ENCODE measurements at regions of chr6 and their contacts with region 1.

Region 1: GRCh38 chr6:44172731-44173500 is 14.3 kb downstream of the CAPN11 start:
- DNase-seq: peak; percentile 63
- ATAC-seq: peak; percentile 75
- H3K4me3 Mint-ChIP-seq: no peak overlapping the region
- H3K27ac Mint-ChIP-seq: no peak overlapping the region
- H3K4me1 Mint-ChIP-seq: peaks cover 14% of the 10 kb centered on the region
- H3K27me3 Mint-ChIP-seq: peaks cover 7% of the 10 kb centered on the region
- CTCF ChIP-seq: no peak

Region 2: GRCh38 chr6:44237813-44238433 is 65.0 kb after region 1 on chr6:
- CTCF ChIA-PET with region 1: interaction called, 30 read pairs
- POLR2A ChIA-PET with region 1: interaction called, 5 read pairs
- intact Hi-C with region 1: loop called (anchors 1 kb)
- DNase-seq: peak; percentile 87
- ATAC-seq: peak; percentile 91
- H3K4me3 Mint-ChIP-seq: peak overlapping the region; percentile 95
- H3K27ac Mint-ChIP-seq: peak overlapping the region; percentile 90
- H3K4me1 Mint-ChIP-seq: peaks cover 17% of the 10 kb centered on the region
- H3K27me3 Mint-ChIP-seq: no peaks in the 10 kb centered on the region
- CTCF ChIP-seq: peak; percentile 84

Region 3: GRCh38 chr6:44304282-44305199 is 131.6 kb after region 1 on chr6:
- CTCF ChIA-PET with region 1: interaction called, 21 read pairs
- POLR2A ChIA-PET with region 1: interaction called, 3 read pairs
- intact Hi-C with region 1: loop called (anchors 1 kb)
- DNase-seq: peak; percentile 47
- ATAC-seq: peak; percentile 93
- H3K4me3 Mint-ChIP-seq: no peak overlapping the region
- H3K27ac Mint-ChIP-seq: no peak overlapping the region
- H3K4me1 Mint-ChIP-seq: no peaks in the 10 kb centered on the region
- H3K27me3 Mint-ChIP-seq: no peaks in the 10 kb centered on the region
- CTCF ChIP-seq: peak; percentile 33

Region 4: GRCh38 chr6:44312901-44313788 is 140.2 kb after region 1 on chr6 and contains the start of gene AARS2:
- CTCF ChIA-PET with region 1: interaction called, 3 read pairs
- POLR2A ChIA-PET with region 1: interaction called, 3 read pairs
- intact Hi-C with region 1: loop called (anchors 1 kb)
- DNase-seq: peak; percentile 94
- ATAC-seq: peak; percentile 96
- H3K4me3 Mint-ChIP-seq: peak within 1 kb of the TSS; percentile 96
- H3K27ac Mint-ChIP-seq: peak within 1 kb of the TSS; percentile 91
- H3K4me1 Mint-ChIP-seq: peaks cover 14% of the 10 kb centered on the region
- H3K27me3 Mint-ChIP-seq: peaks cover 6% of the 10 kb centered on the region
- CTCF ChIP-seq: peak; percentile 85
- total RNA-seq, gene AARS2: 19.1 and 22.4 TPM in 2 replicates

Region 5: DNA sequence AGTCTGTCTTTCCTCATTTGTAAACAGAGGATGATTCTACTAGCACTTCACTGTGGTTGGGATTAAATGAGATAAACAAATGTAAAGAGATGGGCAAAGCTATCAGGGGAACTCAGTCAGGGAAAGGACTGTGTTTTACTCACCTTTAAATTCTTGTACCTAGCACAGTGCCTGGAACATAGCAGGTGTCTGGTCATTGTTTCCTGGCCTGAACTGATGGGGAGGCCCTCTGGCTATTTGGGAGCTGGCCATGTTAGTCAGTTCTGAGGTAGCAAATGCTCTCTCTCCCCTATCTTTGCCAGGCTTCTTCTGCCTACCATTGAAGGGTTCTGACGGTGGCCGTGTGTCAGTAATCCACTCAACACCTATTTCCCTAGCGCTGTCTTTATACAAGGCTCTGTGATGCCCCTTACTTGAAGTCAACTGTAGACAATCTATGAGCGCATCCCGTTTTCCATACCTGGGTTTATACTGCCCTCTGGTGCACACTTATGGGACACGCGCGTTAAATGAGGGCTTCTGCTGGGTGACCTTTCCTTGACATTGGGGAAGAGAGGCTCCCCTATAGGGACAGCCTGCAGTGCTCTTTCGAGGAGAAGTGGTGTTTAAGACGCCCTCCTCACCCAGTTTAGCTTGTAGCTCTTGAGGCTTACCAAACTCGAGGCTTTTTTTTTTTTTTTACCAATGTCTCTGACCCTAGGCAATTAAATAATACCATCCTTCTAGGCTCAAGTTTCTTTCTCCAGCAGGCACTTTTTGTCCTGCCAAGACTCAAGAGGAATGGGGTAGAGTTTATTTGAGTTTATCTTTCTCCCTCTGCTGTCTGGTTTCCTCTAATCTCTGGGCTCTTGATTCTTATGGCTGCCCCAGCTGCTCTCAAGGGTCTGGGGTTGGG is 165.6 kb after region 1 on chr6:
- CTCF ChIA-PET with region 1: interaction called, 39 read pairs
- POLR2A ChIA-PET with region 1: no interaction called
- intact Hi-C with region 1: loop called (anchors 1 kb)
- DNase-seq: peak; percentile 36
- ATAC-seq: peak; percentile 94
- H3K4me3 Mint-ChIP-seq: no peak overlapping the region
- H3K27ac Mint-ChIP-seq: no peak overlapping the region
- H3K4me1 Mint-ChIP-seq: no peaks in the 10 kb centered on the region
- H3K27me3 Mint-ChIP-seq: peaks cover 22% of the 10 kb centered on the region
- CTCF ChIP-seq: peak; percentile 58

Region 6: DNA sequence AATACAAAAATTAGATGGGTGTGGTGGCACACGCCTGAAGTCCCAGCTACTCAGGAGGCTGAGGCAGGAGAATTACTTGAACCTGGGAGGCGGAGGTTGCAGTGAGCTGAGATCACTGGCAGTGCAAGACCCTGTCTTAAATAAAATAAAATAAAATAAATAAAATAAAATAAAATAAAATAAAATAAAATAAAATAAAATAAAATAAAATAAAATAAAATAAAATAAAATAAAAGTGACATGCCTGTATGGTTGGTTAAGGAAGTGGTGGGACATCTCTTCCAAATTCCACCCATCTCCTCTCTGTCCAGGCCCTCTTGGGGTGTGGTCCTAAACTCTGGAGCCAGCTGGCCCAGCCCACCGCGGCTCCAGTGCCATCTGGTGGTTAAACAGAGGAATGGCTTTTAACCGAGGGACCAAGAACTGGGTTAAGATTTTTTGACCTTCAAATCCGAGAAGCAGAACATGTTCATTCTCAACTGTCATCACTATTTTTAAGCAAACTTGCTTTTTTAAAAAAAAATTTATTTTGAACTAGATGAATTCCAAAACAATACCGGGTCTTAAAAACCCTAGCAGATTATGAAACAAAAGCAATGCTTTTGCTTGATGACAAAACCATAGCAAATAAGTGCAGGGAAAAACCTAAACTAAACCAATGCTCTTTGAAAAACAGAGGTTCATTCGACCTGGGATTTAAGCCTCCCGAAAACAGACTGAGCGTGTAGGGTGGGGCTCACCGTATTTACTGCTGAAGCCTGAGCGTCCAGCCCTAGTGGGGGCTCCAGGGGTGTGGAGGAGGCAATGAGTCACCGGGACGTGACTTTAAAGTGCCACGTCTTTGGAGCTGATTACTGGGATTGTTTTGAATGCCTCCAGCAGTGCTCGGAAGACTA is 283.4 kb after region 1 on chr6:
- CTCF ChIA-PET with region 1: no interaction called
- POLR2A ChIA-PET with region 1: no interaction called
- intact Hi-C with region 1: loop called (anchors 5 kb)
- DNase-seq: no peak
- ATAC-seq: peak; percentile 77
- H3K4me3 Mint-ChIP-seq: no peak overlapping the region
- H3K27ac Mint-ChIP-seq: no peak overlapping the region
- H3K4me1 Mint-ChIP-seq: no peaks in the 10 kb centered on the region
- H3K27me3 Mint-ChIP-seq: peaks cover 3% of the 10 kb centered on the region
- CTCF ChIP-seq: peak; percentile 93